Right lobe of liver (tissue), 6 donors: ENCODE measurements at regions of chr2 and their contacts with region 1.

Region 1: DNA sequence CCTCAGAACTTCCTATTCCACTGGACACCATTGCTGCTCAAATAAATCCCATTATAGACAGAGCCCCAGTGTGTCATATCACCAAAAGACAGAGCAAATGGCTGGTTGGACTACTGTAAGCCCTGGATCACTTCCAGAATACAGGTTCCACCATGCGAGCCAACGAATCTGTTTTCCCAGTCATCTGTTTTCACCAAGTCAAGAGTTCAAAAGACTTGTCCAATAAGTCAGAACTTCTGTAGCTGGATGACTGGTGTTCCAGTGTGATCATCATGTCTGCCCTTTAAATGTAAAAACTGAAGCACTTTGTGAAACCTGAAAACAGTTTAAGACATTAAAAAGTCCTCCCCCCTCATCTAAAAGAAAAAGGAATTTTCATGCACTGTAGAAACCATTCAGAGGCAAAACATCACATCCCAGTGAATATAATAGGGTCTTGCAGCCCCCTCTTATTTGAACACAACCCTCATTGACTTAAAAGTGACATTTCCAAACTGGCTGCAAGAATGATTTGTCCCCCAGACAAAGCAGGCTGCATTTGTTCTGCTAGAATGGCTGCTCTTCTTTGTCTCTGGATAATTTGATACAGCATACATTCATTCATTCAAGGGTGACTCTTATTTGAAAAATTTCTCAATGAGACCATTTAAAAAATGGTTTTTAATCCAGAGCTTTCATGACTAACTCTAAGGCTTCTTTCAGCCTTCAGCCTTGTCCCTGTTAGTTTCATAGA is 64.6 kb upstream of the TANC1 start:
- DNase-seq: no peak
- ATAC-seq: no peak
- H3K4me3 ChIP-seq: no peak overlapping the region
- H3K27ac ChIP-seq: no peak overlapping the region
- H3K4me1 ChIP-seq: no peaks in the 10 kb centered on the region
- H3K27me3 ChIP-seq: no peaks in the 10 kb centered on the region
- CTCF ChIP-seq: no peak
- POLR2A ChIP-seq: no peak

Region 2: GRCh38 chr2:158828493-158829164 is 75.2 kb before region 1 on chr2:
- intact Hi-C with region 1: no loop called
- DNase-seq: no peak
- ATAC-seq: peak; percentile 54 to 69 (median 63)
- H3K4me3 ChIP-seq: no peak overlapping the region
- H3K27ac ChIP-seq: no peak overlapping the region
- H3K4me1 ChIP-seq: peaks cover 0 to 13% (median 0%) of the 10 kb centered on the region in 4 donors
- H3K27me3 ChIP-seq: no peaks in the 10 kb centered on the region
- CTCF ChIP-seq: no peak
- POLR2A ChIP-seq: no peak

Region 3: DNA sequence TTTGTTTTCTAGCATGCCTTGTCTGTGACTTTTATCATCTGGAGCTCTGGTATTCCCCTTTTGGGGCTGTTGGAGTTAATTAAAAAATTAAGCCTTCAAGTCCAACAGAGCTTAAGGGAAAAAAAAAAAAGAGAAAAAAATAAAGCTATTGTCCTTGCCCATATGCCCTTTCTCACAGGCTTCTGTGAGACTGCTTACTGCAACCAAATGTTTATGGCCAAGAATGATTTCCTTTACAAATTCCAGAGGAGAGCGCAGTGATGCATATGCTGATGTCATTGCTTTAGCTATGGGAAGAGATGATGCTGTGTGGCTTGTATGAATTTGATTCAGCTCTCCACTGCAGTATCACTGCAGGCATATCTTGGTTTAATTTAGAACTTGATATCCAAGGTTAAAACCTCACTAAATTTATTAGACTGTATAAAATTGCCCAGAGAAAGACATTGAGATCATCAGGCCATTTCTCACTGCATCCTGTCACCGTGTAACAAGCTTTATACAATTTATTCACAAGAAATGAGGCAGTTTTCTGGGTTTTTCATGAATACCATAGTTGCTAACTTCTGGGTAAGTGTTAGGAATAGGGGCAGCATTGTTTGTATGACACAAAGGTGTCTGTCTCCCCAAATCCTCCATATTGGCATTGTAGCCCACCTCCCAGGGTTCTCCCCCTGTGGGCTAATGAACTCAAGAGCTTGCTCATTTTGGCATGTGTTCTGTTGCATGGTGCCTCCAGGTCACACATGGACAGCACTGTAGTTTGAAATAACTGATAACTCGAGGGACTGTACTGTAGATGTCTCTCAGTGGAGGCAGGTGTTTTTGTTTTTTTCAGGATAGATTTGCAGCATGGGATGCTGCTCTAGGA is 149.5 kb after region 1 on chr2:
- intact Hi-C with region 1: no loop called
- DNase-seq: no peak
- ATAC-seq: peak in 1 of 4 donors; percentile 67
- H3K4me3 ChIP-seq: no peak overlapping the region
- H3K27ac ChIP-seq: no peak overlapping the region
- H3K4me1 ChIP-seq: no peaks in the 10 kb centered on the region
- H3K27me3 ChIP-seq: no peaks in the 10 kb centered on the region
- CTCF ChIP-seq: no peak
- POLR2A ChIP-seq: no peak

Region 4: DNA sequence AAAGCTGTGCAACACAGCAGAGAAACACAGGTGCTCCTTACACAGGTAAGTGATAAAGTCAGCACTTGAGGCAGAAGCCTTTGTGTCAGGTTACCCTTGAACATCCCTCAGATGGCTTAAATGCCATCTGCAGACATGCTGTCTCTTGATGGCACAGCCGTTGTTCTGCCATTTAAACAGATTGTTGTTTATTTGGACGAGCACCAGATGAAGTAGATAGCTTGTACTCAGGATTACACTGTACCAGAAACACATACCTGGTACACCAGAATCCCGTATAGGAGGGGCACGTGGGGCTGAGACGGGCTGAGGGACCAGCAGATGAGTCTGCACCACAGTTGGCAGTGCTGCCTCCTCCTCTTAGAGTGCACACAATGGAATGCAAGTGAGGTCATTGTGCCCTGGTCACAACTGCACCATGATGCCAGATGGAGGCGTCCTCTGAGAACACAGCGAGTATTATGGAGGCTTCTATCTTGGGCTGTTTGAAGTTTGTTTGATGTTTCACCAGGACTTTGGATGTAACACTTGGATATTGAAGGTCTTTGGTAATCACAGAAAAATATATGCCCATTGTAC is 207.6 kb after region 1 on chr2:
- intact Hi-C with region 1: loop called in 1 of 2 experiments (anchors 5 kb)
- DNase-seq: no peak
- ATAC-seq: peak in 1 of 4 donors; percentile 38
- H3K4me3 ChIP-seq: no peak overlapping the region
- H3K27ac ChIP-seq: no peak overlapping the region
- H3K4me1 ChIP-seq: no peaks in the 10 kb centered on the region
- H3K27me3 ChIP-seq: no peaks in the 10 kb centered on the region
- CTCF ChIP-seq: no peak
- POLR2A ChIP-seq: no peak